Activated CD4-positive, alpha-beta T cell treated with anti-CD3 and anti-CD28 coated beads, Interleukin-2, amount 10 ng/mL, durations not matched to agents 7 days and 5 days (primary cell): ENCODE measurements at regions of chr2 and their contacts with region 1.

Region 1: GRCh38 chr2:136034629-136035028 is 49.2 kb upstream of the DARS1 start:
- DNase-seq: no peak
- H3K4me3 Mint-ChIP-seq: no peak overlapping the region
- H3K27ac Mint-ChIP-seq: no peak overlapping the region
- H3K4me1 Mint-ChIP-seq: no peaks in the 10 kb centered on the region
- H3K27me3 Mint-ChIP-seq: peaks cover 5% of the 10 kb centered on the region

Region 2: GRCh38 chr2:136022396-136023146 is 12.1 kb before region 1 on chr2:
- CTCF ChIA-PET with region 1: interaction called, 11 read pairs
- POLR2A ChIA-PET with region 1: no interaction called
- DNase-seq: no peak
- H3K4me3 Mint-ChIP-seq: no peak overlapping the region
- H3K27ac Mint-ChIP-seq: no peak overlapping the region
- H3K4me1 Mint-ChIP-seq: peaks cover 20% of the 10 kb centered on the region
- H3K27me3 Mint-ChIP-seq: no peaks in the 10 kb centered on the region

Region 3: DNA sequence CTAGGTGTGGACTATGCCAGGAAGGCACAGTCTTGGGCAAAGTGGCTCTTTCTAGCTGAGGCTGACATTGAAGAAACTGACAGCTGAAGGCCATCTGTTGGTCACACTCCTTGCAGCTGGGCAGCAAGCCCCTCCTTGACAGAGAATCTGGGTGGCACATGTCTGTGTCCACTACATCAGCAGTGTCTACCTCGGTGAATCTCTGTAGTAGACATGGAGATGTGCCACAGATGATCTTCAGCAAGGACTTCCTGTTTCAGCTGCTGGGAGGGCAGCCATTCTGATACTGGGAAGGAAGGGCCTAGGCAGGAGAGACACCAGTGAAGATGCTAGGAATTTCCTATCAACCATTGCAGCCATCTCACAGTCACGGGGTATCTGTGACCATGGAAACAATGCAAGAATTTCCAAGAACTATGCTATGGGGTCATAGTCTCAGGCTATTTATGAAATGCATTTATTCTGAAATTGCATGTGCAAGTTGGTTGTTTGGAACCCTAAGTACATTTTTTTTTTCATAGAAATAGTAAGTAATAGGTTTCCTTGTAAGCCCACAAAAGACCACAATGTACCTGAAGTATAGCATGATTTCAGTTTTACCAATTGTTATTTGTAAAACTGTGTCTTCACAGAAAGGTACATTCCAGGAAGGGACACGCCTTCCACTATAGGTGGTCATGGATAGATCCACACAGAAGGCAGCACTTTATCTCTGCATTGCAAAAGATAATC is 14.5 kb after region 1 on chr2:
- CTCF ChIA-PET with region 1: interaction called, 17 read pairs
- POLR2A ChIA-PET with region 1: no interaction called
- DNase-seq: peak; percentile 24
- H3K4me3 Mint-ChIP-seq: no peak overlapping the region
- H3K27ac Mint-ChIP-seq: peak overlapping the region; percentile 90
- H3K4me1 Mint-ChIP-seq: peaks cover 87% of the 10 kb centered on the region
- H3K27me3 Mint-ChIP-seq: no peaks in the 10 kb centered on the region

Region 4: DNA sequence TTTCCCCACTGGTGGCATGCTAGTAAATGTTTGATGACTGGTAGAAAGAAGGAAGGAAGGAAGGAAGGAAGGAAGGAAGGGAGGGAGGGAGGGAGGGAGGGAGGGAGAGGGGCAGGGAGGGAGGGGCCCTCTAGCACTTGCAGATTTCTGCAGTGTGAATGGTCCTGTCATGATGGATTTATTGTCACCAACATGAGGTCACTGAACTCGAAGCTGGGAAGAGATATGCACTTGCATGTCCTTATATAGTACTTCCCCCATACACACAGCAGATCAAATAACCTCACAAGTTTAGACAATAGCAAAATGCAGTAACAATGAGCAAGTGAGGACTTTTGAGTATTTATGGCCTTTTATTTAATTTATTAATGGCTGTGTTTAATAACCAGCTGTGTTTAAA is 127.8 kb after region 1 on chr2:
- CTCF ChIA-PET with region 1: no interaction called
- POLR2A ChIA-PET with region 1: no interaction called
- DNase-seq: no peak
- H3K4me3 Mint-ChIP-seq: no peak overlapping the region
- H3K27ac Mint-ChIP-seq: no peak overlapping the region
- H3K4me1 Mint-ChIP-seq: peaks cover 11% of the 10 kb centered on the region
- H3K27me3 Mint-ChIP-seq: no peaks in the 10 kb centered on the region